ENCODE measurements at regions of chr19 and their contacts with region 1.

Region 1: DNA sequence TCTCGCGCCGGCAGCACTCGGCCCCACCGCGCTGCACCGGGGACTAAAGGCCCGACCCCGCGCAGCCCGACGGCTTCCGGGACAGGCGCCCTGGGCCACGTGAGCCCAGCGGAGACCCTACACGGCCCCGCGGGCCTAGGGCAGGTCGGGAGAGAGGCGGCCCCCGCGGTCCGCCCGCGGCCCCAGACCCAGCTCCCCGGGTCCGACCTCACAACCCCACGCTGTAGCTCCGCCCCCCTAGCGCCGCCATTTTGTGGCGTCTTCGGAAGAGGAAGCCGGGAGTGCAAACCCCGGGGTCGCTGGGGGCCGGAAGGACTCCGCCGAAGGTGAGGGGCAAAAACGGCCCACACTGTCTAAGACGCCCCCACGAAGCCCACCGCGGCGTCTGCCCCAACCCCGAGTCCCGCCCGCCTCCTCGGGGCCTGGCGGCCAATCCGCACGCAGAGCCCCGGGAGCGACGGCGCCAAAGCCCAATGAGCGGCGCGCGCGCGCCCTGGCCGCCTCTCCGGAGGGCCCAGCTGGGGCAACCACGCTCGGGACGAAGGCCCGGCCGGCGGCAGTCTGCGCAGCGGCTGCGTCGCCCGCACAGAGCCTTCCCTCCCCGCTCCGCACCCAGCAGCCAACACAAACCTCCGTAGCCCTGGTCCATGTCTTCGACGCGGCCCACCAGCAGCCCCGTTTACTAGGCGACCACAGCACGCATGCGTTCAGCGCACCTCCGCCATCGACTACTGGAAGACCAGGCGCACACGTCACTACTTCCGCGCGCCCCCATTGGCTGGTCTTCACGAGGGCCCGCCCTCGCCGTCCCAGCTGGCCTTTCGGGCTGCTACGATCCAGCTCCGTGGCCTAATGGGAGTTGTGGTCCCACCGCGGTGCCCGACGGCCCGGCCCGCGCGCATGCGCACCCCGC is at the start of gene AKAP8:
- DNase-seq: peak; percentile 99
- H3K4me3 ChIP-seq: peak within 1 kb of the TSS; percentile 84 to 99 (median 87)
- H3K27ac ChIP-seq: peak within 1 kb of the TSS; percentile 89 to 99 (median 95)
- H3K4me1 ChIP-seq: peaks cover 0 to 47% (median 45%) of the 10 kb centered on the region in 4 donors
- H3K27me3 ChIP-seq: no peaks in the 10 kb centered on the region
- CTCF ChIP-seq: no peak
- EP300 ChIP-seq: no peak
- POLR2A ChIP-seq: peak; percentile 27 to 42
- total RNA-seq, gene AKAP8: 15.0 to 43.8 (median 21.4) TPM

Region 2: GRCh38 chr19:15177269-15178116 is 201.8 kb before region 1 on chr19:
- intact Hi-C with region 1: loop called (anchors 2 kb)
- DNase-seq: peak; percentile 86
- H3K4me3 ChIP-seq: peak overlapping the region in 3 of 4 donors; percentile 13 to 36 (median 27)
- H3K27ac ChIP-seq: no peak overlapping the region
- H3K4me1 ChIP-seq: peaks cover 0 to 10% (median 8%) of the 10 kb centered on the region in 4 donors
- H3K27me3 ChIP-seq: peaks cover 4 to 18% (median 10%) of the 10 kb centered on the region in 3 donors
- CTCF ChIP-seq: peak; percentile 82 to 97 (median 87)
- EP300 ChIP-seq: no peak
- POLR2A ChIP-seq: no peak

Region 3: DNA sequence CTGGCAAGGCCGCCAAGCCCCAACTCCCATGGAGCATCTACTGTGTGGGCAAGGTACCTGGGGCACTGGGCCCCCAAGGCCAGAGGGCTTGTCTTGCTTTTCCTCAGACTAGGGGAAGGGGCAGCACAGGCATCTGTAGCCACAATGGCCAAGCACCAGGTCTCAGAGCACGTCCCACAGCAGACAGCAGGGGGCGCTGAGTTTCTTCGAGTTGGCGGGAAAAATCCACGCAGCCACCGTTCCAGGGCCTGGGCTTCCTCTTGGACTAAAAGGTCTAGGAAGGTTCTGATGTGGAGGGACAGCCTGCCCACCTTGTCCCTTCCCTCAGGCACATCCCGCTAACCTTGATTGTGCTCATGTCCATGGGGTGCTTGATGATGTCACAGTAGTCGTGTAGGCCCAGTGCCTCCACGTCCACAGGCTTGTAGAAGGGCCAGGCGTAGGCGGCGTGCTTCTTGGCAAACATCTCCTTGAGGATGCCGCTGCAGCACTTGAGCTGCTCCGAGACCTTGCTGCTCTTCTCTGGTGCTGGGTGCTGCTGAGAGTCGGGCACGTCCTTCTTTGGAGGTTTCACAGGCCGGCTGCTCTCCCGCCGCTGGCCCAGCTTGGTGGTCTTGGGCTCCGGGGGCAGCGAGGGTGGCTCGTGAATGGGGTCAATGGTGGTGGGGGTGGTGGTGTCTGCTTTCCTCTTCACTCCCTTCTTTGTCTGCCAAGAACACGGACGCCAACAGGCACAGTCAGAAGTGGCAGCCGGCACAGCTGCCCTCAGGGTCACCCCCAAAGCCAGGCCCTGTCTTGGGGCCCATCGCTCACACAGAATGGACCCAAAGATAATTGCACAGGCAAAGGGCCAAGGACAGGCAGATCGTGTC is 115.0 kb before region 1 on chr19:
- intact Hi-C with region 1: loop called (anchors 1 kb)
- DNase-seq: peak; percentile 91
- H3K4me3 ChIP-seq: no peak overlapping the region
- H3K27ac ChIP-seq: peak overlapping the region; percentile 66 to 89 (median 76)
- H3K4me1 ChIP-seq: peaks cover 0 to 62% (median 58%) of the 10 kb centered on the region in 4 donors
- H3K27me3 ChIP-seq: no peaks in the 10 kb centered on the region
- CTCF ChIP-seq: peak; percentile 75 to 89 (median 84)
- EP300 ChIP-seq: no peak
- POLR2A ChIP-seq: no peak

Region 4: DNA sequence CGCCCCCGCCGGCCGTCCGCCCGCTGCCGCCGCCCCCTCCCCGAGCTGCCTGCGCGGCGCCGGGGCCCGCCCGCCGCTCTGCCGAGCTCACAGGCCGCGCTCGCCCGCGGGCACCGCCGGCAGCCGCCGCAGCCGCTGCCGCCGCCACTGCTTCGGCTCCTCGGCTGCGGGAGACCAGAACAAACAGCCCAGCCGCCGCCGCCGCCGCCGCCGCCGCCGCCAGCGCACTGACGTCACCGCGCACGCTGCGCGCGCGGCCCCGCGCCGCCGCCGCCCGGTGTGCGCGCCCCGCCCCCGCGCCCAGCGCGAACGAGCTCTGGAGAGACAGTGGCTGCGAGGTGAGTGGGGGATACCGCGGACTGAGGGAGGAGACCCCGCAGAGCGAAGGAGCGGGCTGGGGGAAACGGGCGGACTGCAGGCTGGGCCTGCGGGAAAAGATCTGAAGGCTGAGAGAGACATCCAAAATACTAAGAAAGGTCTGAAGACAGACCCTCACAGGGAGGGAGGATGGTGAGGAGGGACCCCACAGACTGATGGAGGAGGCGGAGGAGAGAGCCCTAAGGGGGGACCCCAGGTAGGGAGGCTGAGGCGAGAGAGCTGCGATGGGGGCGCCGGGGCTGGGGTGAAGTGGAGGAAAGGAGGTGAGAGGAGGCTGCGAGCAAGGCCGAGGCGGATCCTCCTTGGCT is 46.9 kb before region 1 on chr19 and contains the start of gene BRD4:
- intact Hi-C with region 1: loop called (anchors 2 kb)
- DNase-seq: peak; percentile 85
- H3K4me3 ChIP-seq: peak within 1 kb of the TSS; percentile 86 to 94 (median 88)
- H3K27ac ChIP-seq: peak within 1 kb of the TSS; percentile 91 to 97 (median 96)
- H3K4me1 ChIP-seq: peaks cover 0 to 47% (median 44%) of the 10 kb centered on the region in 4 donors
- H3K27me3 ChIP-seq: no peaks in the 10 kb centered on the region
- CTCF ChIP-seq: no peak
- EP300 ChIP-seq: no peak
- POLR2A ChIP-seq: no peak
- total RNA-seq, gene BRD4: 15.0 to 43.8 (median 21.4) TPM

Region 5: DNA sequence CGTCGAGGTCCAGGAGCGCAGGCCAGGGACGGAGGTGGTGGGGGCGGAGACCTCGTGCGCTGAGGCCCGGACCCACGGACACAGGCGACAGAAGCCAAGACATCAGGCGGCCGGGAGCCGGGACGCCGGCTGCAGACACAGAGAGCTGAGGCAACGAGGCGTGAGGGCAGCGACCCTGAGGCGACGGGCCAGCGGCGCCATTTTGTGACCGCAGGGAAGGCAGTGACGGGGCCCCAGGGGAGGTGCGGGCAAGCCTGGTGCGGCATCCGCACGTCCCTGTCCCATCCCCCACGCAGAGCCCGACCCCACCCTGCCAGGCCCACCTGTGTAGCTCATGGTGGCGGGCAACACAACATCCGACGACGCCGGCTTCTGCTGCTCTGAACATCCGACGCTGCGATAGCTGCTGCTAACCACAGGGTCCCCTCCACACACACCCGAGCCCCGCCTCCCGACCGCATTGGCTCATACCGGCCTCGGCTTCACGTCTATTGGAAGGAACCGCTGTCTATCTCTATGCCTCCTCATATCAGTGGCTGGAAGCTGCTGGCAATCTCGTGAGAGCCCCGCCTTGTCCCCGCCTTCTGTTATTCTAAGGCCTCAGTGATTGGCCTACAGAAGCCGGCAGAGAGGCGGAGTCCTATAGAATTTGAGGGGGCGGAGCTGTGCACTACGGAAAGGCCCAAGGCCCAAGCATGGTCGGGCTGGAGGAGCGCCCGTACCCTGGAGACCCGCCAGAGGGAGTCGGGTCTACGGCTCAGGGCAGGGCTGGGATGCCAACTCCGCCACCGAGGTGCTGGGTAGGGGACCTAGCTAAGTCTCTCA is 39.5 kb after region 1 on chr19 and contains the start of gene AKAP8L:
- intact Hi-C with region 1: loop called (anchors 1 kb)
- DNase-seq: peak; percentile 100
- H3K4me3 ChIP-seq: peak within 1 kb of the TSS; percentile 73 to 81 (median 78)
- H3K27ac ChIP-seq: peak within 1 kb of the TSS; percentile 85 to 94 (median 90)
- H3K4me1 ChIP-seq: peaks cover 0 to 48% (median 42%) of the 10 kb centered on the region in 4 donors
- H3K27me3 ChIP-seq: no peaks in the 10 kb centered on the region
- CTCF ChIP-seq: peak; percentile 43 to 50 (median 46)
- EP300 ChIP-seq: no peak
- POLR2A ChIP-seq: peak; percentile 94 to 95
- total RNA-seq, gene AKAP8L: 90.5 to 145 (median 101) TPM

Region 6: GRCh38 chr19:15432629-15433518 is 53.5 kb after region 1 on chr19:
- intact Hi-C with region 1: loop called (anchors 5 kb)
- DNase-seq: peak; percentile 93
- H3K4me3 ChIP-seq: peak overlapping the region; percentile 58 to 99 (median 92)
- H3K27ac ChIP-seq: peak overlapping the region; percentile 84 to 95 (median 88)
- H3K4me1 ChIP-seq: peaks cover 0 to 52% (median 42%) of the 10 kb centered on the region in 4 donors
- H3K27me3 ChIP-seq: no peaks in the 10 kb centered on the region
- CTCF ChIP-seq: no peak
- EP300 ChIP-seq: no peak
- POLR2A ChIP-seq: no peak

Measured in sigmoid colon (tissue), 7 donors.